ENCODE measurements at regions of chr15 and their contacts with region 1.

Region 1: DNA sequence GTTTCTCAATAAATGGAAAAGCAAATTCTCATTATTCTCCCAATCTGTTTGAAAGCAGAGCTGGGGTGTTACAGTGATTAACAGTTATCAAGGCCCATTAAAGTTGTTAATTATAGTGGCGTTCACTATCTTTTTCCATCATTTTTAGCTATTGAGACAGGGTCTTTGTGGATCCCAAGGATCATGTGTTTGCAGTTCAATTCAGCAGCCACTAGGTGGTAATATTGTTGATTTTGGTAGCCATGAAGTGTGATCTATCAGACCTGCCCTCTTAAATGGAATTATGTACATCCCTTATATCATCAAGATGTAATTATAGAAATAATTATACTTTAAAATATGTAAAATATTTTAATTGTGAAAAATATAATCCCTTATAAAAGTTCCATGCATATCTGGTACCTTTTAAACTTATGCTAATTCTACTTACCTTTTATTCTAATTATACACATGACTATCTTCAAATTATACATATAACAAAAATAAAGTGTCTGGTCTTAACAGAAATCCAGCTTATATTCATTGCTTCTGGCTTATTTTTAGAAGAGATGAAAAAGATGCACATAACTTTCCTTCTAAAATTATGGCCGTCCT is 126.4 kb downstream of the GREM1 start:
- DNase-seq: no peak
- H3K4me3 ChIP-seq: no peak overlapping the region
- H3K27ac ChIP-seq: no peak overlapping the region
- H3K4me1 ChIP-seq: peaks cover 0 to under 1% (median 0%) of the 10 kb centered on the region in 4 experiments; a peak in 2 of 7 replicates
- H3K27me3 ChIP-seq: no peaks in the 10 kb centered on the region
- CTCF ChIP-seq: peak in 2 of 3 experiments; percentile 50 to 55; a peak in 3 of 4 replicates
- EP300 ChIP-seq: no peak
- POLR2A ChIP-seq: no peak
- RAD21 ChIP-seq: peak; percentile 65 to 71

Region 2: GRCh38 chr15:32651229-32651837 is 192.9 kb before region 1 on chr15:
- CTCF ChIA-PET with region 1: interaction called, 17 read pairs
- POLR2A ChIA-PET with region 1: no interaction called
- DNase-seq: peak in 1 of 2 experiments; percentile 73
- H3K4me3 ChIP-seq: no peak overlapping the region
- H3K27ac ChIP-seq: no peak overlapping the region
- H3K4me1 ChIP-seq: peaks cover 0 to 12% (median 2%) of the 10 kb centered on the region in 4 experiments; a peak in 4 of 7 replicates
- H3K27me3 ChIP-seq: no peaks in the 10 kb centered on the region
- CTCF ChIP-seq: peak; percentile 94 to 98 (median 97)
- EP300 ChIP-seq: no peak
- POLR2A ChIP-seq: no peak
- RAD21 ChIP-seq: peak; percentile 85 to 92

Region 3: DNA sequence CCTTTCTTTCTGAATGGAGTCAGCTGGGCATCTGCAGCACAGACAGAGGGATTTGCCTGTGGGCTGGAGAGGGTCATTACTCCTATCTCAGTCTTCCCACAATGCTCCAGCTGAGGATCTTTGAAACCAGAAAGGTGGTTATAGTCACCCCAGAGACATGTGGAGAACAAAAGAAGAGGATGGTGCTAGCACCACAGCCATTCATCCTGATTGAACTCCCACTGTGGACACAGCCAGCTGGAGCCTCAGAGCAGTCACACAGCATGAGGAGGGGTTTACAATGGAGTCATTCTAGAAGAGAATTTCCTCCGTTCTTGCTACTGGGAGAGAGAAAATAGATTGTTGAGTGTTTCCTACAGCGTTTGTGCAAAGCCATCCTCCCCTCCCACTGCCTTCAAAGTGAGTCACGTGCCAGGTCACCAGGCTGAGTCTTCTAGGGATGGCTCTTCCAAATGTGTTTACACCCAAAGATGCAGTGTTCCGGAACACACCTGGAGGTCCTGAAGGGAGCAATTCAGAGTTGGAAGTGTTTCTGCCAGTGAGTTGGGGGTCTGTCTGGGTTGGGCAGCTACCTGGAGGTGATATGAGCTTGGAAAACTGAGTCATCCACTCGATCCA is 145.3 kb before region 1 on chr15:
- CTCF ChIA-PET with region 1: no interaction called
- POLR2A ChIA-PET with region 1: no interaction called
- DNase-seq: no peak
- H3K4me3 ChIP-seq: no peak overlapping the region
- H3K27ac ChIP-seq: no peak overlapping the region
- H3K4me1 ChIP-seq: no peaks in the 10 kb centered on the region; a peak in 1 of 7 replicates
- H3K27me3 ChIP-seq: no peaks in the 10 kb centered on the region
- CTCF ChIP-seq: no peak
- EP300 ChIP-seq: no peak
- POLR2A ChIP-seq: no peak
- RAD21 ChIP-seq: no peak

Region 4: DNA sequence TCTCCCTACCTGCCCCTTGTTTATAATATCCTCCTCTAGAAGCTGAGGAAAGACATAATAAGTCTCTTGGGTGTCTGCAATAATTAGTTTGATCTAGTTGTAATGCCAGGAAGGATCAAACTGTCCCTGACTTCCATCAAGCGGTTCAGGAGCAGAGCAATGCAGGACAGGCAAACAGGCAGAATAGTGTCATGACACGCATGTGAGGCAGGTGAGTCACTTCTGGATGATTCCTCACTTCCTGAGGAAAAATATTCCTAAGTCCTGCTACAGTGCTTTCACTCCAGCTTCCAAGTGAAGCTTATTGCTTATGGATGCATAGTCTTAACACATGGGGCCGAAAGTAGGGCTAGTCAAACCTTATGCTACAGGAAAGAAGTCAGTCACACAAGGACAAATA is 40.6 kb before region 1 on chr15:
- CTCF ChIA-PET with region 1: interaction called, 10 read pairs
- POLR2A ChIA-PET with region 1: no interaction called
- DNase-seq: no peak
- H3K4me3 ChIP-seq: no peak overlapping the region
- H3K27ac ChIP-seq: no peak overlapping the region
- H3K4me1 ChIP-seq: no peaks in the 10 kb centered on the region
- H3K27me3 ChIP-seq: no peaks in the 10 kb centered on the region
- CTCF ChIP-seq: no peak
- EP300 ChIP-seq: no peak
- POLR2A ChIP-seq: no peak
- RAD21 ChIP-seq: no peak

Region 5: DNA sequence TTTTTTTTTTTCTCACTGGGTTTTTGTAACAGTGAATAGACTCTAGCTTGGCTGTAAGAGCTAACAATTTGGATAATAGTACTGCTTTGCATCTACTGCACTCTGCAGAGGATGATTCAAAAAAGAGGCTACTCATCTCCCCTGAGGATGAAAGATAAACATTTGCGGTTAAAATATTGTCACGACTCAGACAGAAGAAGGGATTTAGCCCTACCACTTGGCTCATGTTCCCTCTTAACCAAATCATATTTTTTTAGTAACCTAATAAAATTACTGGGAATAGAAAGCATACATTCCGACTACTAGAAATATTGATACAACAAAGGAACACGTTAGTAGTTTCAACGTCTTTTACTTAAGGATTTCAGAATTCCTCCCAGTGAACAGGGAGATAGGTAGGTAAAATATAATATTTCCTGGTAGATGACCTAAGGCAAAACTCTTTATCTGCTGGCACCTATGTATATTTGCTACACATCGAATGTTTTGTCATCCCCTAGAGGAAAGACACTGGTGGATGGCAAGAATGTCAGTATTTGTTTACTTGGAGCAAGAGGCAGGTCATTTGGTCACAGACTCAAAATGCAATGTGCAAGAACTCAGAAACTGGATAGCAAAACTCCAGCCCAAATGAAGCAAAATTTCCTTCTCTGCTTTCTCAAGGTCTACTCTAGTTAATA is 15.6 kb before region 1 on chr15:
- CTCF ChIA-PET with region 1: interaction called, 65 read pairs
- POLR2A ChIA-PET with region 1: interaction called, 3 read pairs
- DNase-seq: no peak
- H3K4me3 ChIP-seq: no peak overlapping the region
- H3K27ac ChIP-seq: no peak overlapping the region
- H3K4me1 ChIP-seq: no peaks in the 10 kb centered on the region
- H3K27me3 ChIP-seq: no peaks in the 10 kb centered on the region
- CTCF ChIP-seq: no peak
- EP300 ChIP-seq: no peak
- POLR2A ChIP-seq: no peak
- RAD21 ChIP-seq: no peak

Region 6: GRCh38 chr15:32861761-32862160 is 17.5 kb after region 1 on chr15:
- CTCF ChIA-PET with region 1: interaction called, 32 read pairs
- POLR2A ChIA-PET with region 1: interaction called, 3 read pairs
- DNase-seq: peak in 1 of 2 experiments; percentile 56
- H3K4me3 ChIP-seq: no peak overlapping the region
- H3K27ac ChIP-seq: no peak overlapping the region
- H3K4me1 ChIP-seq: peaks cover 2 to 11% (median 6%) of the 10 kb centered on the region in 4 experiments; a peak in 6 of 7 replicates
- H3K27me3 ChIP-seq: no peaks in the 10 kb centered on the region
- CTCF ChIP-seq: 0 out of 4 replicates have a peak, but pooled peaks of 1 of the 3 experiments have one; percentile 2
- EP300 ChIP-seq: no peak
- POLR2A ChIP-seq: no peak
- RAD21 ChIP-seq: peak; percentile 22 to 30; a peak in 2 of 4 replicates

Region 7: DNA sequence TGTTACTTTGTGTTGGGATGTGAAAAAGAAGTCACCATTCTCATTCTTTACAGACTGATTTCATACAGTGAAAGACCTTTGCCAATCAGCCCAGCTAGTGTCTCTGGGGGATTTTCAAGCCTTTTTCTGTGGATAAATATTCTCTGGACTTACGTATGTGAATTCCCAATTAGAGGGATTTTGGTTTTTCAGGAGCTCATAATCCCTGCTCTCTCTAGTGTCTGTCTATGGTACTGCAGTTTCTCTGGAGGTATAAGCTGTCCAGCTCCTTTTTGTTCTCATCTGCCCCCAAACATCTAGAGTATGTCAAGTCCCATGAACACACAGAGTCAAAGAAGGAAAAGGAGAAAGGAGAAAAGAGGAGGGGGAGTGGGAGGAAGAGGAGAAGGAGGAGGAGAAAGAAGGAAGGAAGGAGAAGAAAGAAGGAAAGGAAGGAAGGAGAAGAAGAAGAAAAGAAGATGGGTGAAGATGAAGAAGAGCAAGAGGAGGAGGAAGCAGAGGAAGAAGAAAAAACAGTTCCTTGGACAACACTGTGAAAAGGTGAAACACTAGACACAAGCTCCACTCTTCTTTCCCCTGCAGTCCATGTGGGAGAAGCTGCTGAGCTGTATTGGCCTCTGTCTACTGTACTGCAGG is 92.2 kb after region 1 on chr15:
- CTCF ChIA-PET with region 1: interaction called, 19 read pairs
- POLR2A ChIA-PET with region 1: no interaction called
- DNase-seq: no peak
- H3K4me3 ChIP-seq: no peak overlapping the region
- H3K27ac ChIP-seq: no peak overlapping the region
- H3K4me1 ChIP-seq: no peaks in the 10 kb centered on the region
- H3K27me3 ChIP-seq: no peaks in the 10 kb centered on the region
- CTCF ChIP-seq: peak in 2 of 3 experiments; percentile 20 to 41; a peak in 2 of 4 replicates
- EP300 ChIP-seq: no peak
- POLR2A ChIP-seq: no peak
- RAD21 ChIP-seq: peak; percentile 31 to 54; a peak in 2 of 4 replicates

Region 8: GRCh38 chr15:32956006-32956405 is 111.8 kb after region 1 on chr15:
- CTCF ChIA-PET with region 1: interaction called, 57 read pairs
- POLR2A ChIA-PET with region 1: no interaction called
- DNase-seq: no peak
- H3K4me3 ChIP-seq: no peak overlapping the region
- H3K27ac ChIP-seq: no peak overlapping the region
- H3K4me1 ChIP-seq: peaks cover 7 to 17% (median 14%) of the 10 kb centered on the region in 4 experiments; a peak in 6 of 7 replicates
- H3K27me3 ChIP-seq: no peaks in the 10 kb centered on the region
- CTCF ChIP-seq: peak in 2 of 3 experiments; percentile 65 to 74; a peak in 3 of 4 replicates
- EP300 ChIP-seq: no peak
- POLR2A ChIP-seq: no peak
- RAD21 ChIP-seq: peak; percentile 70 to 88

Measured in H1 (cell line).